PC-9 (cell line): ENCODE measurements at regions of chr19 and their contacts with region 1.

Region 1: DNA sequence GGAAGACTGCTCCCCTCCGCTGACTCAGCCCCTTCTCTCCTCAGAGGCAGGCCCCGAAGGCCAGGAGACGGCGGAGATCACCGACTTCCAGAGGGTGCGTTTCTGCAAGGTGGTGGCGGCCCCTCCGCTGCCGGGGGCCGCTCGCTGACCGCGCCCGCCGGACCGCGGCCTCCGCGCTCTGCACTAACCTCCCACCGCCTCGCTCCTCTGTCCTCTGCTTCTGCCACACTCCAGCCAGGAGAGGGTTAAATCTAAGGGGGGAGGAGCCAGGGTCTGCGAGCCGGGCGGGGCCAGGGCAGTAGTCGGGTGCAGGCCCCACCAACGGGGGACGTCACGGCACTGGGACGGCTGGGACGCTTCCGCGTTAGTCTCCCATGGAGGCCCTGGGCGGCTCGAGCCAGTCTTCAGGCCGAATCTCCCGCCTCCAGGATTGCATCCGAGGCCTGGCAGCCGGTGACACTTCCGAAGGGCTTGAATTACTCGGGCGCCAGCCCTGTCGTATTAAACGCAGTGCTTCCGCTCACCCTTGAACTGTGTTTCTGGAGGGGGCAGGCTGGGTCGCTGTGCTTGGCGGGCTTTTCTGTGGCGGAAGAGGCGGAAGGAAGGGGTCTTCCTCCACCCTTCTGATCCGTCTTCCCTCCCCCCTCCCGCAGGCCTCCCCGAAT is 1.2 kb upstream of the INAFM1 start:
- DNase-seq: peak; percentile 85 to 90
- H3K4me3 ChIP-seq: peak overlapping the region; percentile 91
- H3K27ac ChIP-seq: peak overlapping the region; percentile 96
- H3K4me1 ChIP-seq: peaks cover 6% of the 10 kb centered on the region; the same call in 1 of the 2 replicates
- H3K27me3 ChIP-seq: no peaks in the 10 kb centered on the region
- CTCF ChIP-seq: no peak

Region 2: GRCh38 chr19:46346821-46347571 is 926.4 kb before region 1 on chr19 and contains the start of gene PPP5C:
- CTCF ChIA-PET with region 1: no interaction called
- POLR2A ChIA-PET with region 1: interaction called, 33 read pairs
- intact Hi-C with region 1: no loop called
- DNase-seq: peak; percentile 86 to 93
- H3K4me3 ChIP-seq: peak within 1 kb of the TSS; percentile 97
- H3K27ac ChIP-seq: peak within 1 kb of the TSS; percentile 20; the same call in 1 of the 2 replicates
- H3K4me1 ChIP-seq: peaks cover 12% of the 10 kb centered on the region
- H3K27me3 ChIP-seq: peaks cover 13% of the 10 kb centered on the region
- CTCF ChIP-seq: peak; percentile 97
- total RNA-seq, gene PPP5C: 74.7 and 85.4 TPM in 2 replicates

Region 3: GRCh38 chr19:46654621-46655152 is 618.8 kb before region 1 on chr19:
- CTCF ChIA-PET with region 1: no interaction called
- POLR2A ChIA-PET with region 1: no interaction called
- intact Hi-C with region 1: no loop called
- DNase-seq: no peak
- H3K4me3 ChIP-seq: no peak overlapping the region
- H3K27ac ChIP-seq: no peak overlapping the region
- H3K4me1 ChIP-seq: 0 out of 2 replicates have a peak, but pooled peaks cover 5% of the 10 kb centered on the region
- H3K27me3 ChIP-seq: peaks cover 20% of the 10 kb centered on the region
- CTCF ChIP-seq: no peak

Region 4: GRCh38 chr19:47243776-47244547 is 29.5 kb before region 1 on chr19:
- CTCF ChIA-PET with region 1: interaction called, 4 read pairs
- POLR2A ChIA-PET with region 1: interaction called, 17 read pairs
- intact Hi-C with region 1: no loop called
- DNase-seq: peak; percentile 86 to 95
- H3K4me3 ChIP-seq: peak overlapping the region; percentile 71
- H3K27ac ChIP-seq: peak overlapping the region; percentile 87
- H3K4me1 ChIP-seq: peaks cover 26% of the 10 kb centered on the region
- H3K27me3 ChIP-seq: no peaks in the 10 kb centered on the region
- CTCF ChIP-seq: peak; percentile 98

Region 5: DNA sequence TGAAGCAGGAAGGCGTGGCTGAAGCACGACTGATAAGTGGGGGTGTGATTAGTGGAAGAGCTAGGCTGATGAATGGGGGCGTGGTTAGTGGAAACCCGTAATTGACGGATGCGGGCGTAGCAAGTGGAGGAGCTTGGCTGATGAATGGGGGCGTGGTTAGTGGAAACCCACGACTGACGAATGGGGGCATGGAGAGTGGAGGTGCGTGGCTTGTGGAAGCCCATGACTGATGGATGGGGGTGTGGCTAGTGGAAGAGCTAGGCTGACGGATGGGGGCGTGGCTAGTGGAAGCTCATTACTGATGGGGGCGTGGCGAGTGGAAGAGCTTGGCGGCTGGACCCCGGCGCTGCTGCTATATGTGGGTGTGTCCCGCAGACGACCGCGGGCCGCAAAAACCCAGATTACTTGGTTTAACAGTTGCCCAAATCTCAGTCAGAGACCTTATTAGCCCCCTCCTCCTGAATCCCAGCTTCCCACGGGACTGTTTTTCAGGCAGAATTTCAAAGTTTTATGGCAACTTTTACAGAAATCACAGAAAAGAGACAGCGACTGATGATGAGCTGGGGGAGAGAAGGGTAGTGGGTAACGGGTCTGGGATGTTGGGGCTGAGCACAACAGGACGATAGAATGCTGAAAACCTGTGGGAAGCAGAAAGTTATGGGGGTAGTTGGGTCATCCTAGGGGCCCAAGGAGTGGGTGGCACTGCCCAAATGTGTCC is 154.9 kb after region 1 on chr19:
- CTCF ChIA-PET with region 1: no interaction called
- POLR2A ChIA-PET with region 1: interaction called, 17 read pairs
- intact Hi-C with region 1: no loop called
- DNase-seq: peak; percentile 88 to 92
- H3K4me3 ChIP-seq: peak overlapping the region; percentile 33; the same call in 1 of the 2 replicates
- H3K27ac ChIP-seq: 0 out of 2 replicates have a peak overlapping the region, but pooled peaks have one; percentile 19
- H3K4me1 ChIP-seq: peaks cover 22% of the 10 kb centered on the region
- H3K27me3 ChIP-seq: peaks cover 18% of the 10 kb centered on the region
- CTCF ChIP-seq: no peak

Region 6: GRCh38 chr19:47729992-47730889 is 456.8 kb after region 1 on chr19:
- CTCF ChIA-PET with region 1: no interaction called
- POLR2A ChIA-PET with region 1: interaction called, 29 read pairs
- intact Hi-C with region 1: no loop called
- DNase-seq: peak; percentile 82 to 91
- H3K4me3 ChIP-seq: peak overlapping the region; percentile 70
- H3K27ac ChIP-seq: peak overlapping the region; percentile 97
- H3K4me1 ChIP-seq: peaks cover 35% of the 10 kb centered on the region
- H3K27me3 ChIP-seq: no peaks in the 10 kb centered on the region
- CTCF ChIP-seq: no peak